SK-N-SH (cell line): ENCODE measurements at regions of chr17 and their contacts with region 1.

Region 1: GRCh38 chr17:70767102-70767701 is 597.9 kb downstream of the KCNJ2 start:
- DNase-seq: peak; percentile 60
- H3K4me3 ChIP-seq: no peak overlapping the region; a peak in 1 of 4 replicates
- H3K27ac ChIP-seq: no peak overlapping the region
- H3K4me1 ChIP-seq: no peaks in the 10 kb centered on the region; a peak in 1 of 4 replicates
- H3K27me3 ChIP-seq: no peaks in the 10 kb centered on the region
- CTCF ChIP-seq: peak; percentile 99
- EP300 ChIP-seq: no peak
- RAD21 ChIP-seq: peak; percentile 95

Region 2: DNA sequence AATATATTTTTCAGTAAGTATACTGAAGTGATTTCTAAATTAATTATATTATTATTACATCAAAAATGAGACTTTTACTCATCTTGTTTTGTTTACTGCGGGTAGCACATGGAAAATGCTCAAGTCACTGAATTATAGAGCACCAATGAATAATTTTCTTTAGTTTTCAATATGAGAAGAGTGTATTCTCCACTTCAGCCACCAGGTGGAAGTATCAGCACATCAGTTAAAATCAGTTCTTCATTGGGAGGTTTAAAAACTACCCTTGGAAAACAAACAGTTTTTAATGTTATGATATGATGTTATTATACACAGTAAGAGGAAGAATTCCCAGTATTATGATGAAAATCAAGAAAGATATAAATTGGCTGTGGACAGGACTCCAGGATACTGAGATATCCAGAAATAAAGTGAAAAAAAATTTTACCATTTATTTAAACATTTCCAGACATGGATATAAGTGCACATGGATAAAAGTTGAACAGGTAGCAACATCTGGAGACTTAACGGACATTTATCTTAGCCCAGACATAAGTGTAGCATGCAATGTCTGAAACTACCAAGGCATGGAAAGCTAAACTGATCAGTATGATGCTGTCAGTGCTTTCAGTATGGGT is 130.6 kb before region 1 on chr17:
- CTCF ChIA-PET with region 1: interaction called, 12 read pairs
- POLR2A ChIA-PET with region 1: no interaction called
- DNase-seq: peak; percentile 58
- H3K4me3 ChIP-seq: no peak overlapping the region
- H3K27ac ChIP-seq: no peak overlapping the region
- H3K4me1 ChIP-seq: no peaks in the 10 kb centered on the region
- H3K27me3 ChIP-seq: peaks cover 6% of the 10 kb centered on the region; the same call in 1 of the 2 replicates
- CTCF ChIP-seq: peak; percentile 93
- EP300 ChIP-seq: 0 out of 4 replicates have a peak, but pooled peaks of 1 of the 2 experiments have one; percentile 25
- RAD21 ChIP-seq: peak; percentile 99

Region 3: DNA sequence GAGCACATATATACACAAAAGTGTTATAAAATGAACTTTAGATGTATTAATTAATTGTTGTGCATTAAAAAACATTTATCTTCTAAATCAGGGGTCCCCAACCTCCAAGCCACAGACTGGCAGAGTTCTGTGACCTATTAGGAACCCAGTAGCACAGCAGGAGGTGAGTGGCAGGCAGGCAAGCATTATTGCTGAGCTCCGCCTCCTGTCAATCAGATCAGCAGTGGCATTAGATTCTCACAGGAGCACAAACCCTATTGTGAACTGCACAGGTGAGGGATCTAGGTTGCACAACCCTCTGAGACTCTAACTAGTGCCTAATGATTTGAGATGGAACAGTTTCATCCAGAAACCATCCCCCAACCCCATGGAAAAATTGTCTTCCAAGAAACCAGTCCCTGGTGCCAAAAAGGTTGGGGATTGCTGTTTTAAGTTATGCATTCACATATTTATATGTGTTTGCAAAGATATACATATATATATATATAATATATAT is 14.2 kb before region 1 on chr17:
- CTCF ChIA-PET with region 1: interaction called, 40 read pairs
- POLR2A ChIA-PET with region 1: no interaction called
- DNase-seq: no peak
- H3K4me3 ChIP-seq: no peak overlapping the region
- H3K27ac ChIP-seq: no peak overlapping the region
- H3K4me1 ChIP-seq: peaks cover 0 to under 1% of the 10 kb centered on the region in 2 experiments; a peak in 2 of 4 replicates
- H3K27me3 ChIP-seq: no peaks in the 10 kb centered on the region
- CTCF ChIP-seq: no peak
- EP300 ChIP-seq: no peak
- RAD21 ChIP-seq: no peak

Region 4: GRCh38 chr17:71084219-71084618 is 317.0 kb after region 1 on chr17:
- CTCF ChIA-PET with region 1: interaction called, 80 read pairs
- POLR2A ChIA-PET with region 1: no interaction called
- DNase-seq: peak; percentile 28
- H3K4me3 ChIP-seq: no peak overlapping the region; a peak in 1 of 4 replicates
- H3K27ac ChIP-seq: no peak overlapping the region
- H3K4me1 ChIP-seq: no peaks in the 10 kb centered on the region
- H3K27me3 ChIP-seq: no peaks in the 10 kb centered on the region
- CTCF ChIP-seq: peak; percentile 67
- EP300 ChIP-seq: no peak
- RAD21 ChIP-seq: peak; percentile 79

Region 5: GRCh38 chr17:71460943-71461342 is 693.7 kb after region 1 on chr17:
- CTCF ChIA-PET with region 1: interaction called, 30 read pairs
- POLR2A ChIA-PET with region 1: no interaction called
- DNase-seq: no peak
- H3K4me3 ChIP-seq: no peak overlapping the region; a peak in 1 of 4 replicates
- H3K27ac ChIP-seq: no peak overlapping the region
- H3K4me1 ChIP-seq: no peaks in the 10 kb centered on the region; a peak in 2 of 4 replicates
- H3K27me3 ChIP-seq: no peaks in the 10 kb centered on the region
- CTCF ChIP-seq: peak; percentile 75
- EP300 ChIP-seq: no peak
- RAD21 ChIP-seq: peak; percentile 66

Region 6: GRCh38 chr17:72539981-72540897 is 1773.0 kb after region 1 on chr17:
- CTCF ChIA-PET with region 1: interaction called, 56 read pairs
- POLR2A ChIA-PET with region 1: no interaction called
- DNase-seq: peak; percentile 99
- H3K4me3 ChIP-seq: no peak overlapping the region
- H3K27ac ChIP-seq: peak overlapping the region; percentile 31 to 54
- H3K4me1 ChIP-seq: peaks cover 9 to 14% of the 10 kb centered on the region in 2 experiments
- H3K27me3 ChIP-seq: no peaks in the 10 kb centered on the region
- CTCF ChIP-seq: peak; percentile 82
- EP300 ChIP-seq: peak; percentile 14 to 16; a peak in 1 of 4 replicates
- RAD21 ChIP-seq: peak; percentile 93